CD4-positive, alpha-beta memory T cell (primary cell): ENCODE measurements at regions of chr1 and their contacts with region 1.

Region 1: DNA sequence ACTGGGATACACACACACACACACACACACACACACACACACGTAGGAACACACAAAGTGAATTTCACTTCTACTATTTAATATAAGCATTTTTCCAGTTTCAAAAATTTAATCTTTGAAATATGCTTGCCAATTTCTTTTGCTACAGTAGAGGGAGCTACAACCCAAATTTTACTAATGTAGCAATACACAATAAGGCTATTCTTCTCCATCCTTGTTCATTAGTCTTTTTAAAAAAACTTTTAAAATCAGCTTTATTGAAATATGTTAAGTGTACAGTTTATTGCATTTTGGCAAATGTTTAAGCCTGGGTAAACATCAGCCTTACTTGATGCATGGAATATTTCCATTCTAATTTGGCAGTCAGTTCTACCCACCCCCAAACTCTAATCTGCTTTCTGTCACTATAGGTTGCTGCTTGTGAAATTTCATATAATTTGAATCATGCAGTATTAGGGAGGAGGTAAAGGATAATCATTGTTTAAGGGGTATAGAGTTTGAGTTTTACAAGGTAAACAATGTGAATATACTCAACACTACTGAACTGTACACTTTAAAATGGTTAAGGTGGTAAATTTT is 93.0 kb upstream of the TENT5C start:
- DNase-seq: peak in 4 of 5 donors; percentile 23 to 35 (median 28)
- H3K4me3 ChIP-seq: no peak overlapping the region
- H3K4me3 Mint-ChIP-seq: no peak overlapping the region
- H3K27ac ChIP-seq: no peak overlapping the region
- H3K27ac Mint-ChIP-seq: no peak overlapping the region
- H3K4me1 ChIP-seq: no peaks in the 10 kb centered on the region
- H3K4me1 Mint-ChIP-seq: peaks cover 0 to 1% (median 0%) of the 10 kb centered on the region in 4 donors
- H3K27me3 ChIP-seq: no peaks in the 10 kb centered on the region
- H3K27me3 Mint-ChIP-seq: no peaks in the 10 kb centered on the region

Region 2: GRCh38 chr1:117392771-117393170 is 120.1 kb before region 1 on chr1:
- CTCF ChIA-PET with region 1: no interaction called
- POLR2A ChIA-PET with region 1: no interaction called
- intact Hi-C with region 1: no loop called
- DNase-seq: no peak
- H3K4me3 ChIP-seq: no peak overlapping the region
- H3K4me3 Mint-ChIP-seq: peak overlapping the region in 2 of 8 donors; percentile 17 to 26
- H3K27ac ChIP-seq: no peak overlapping the region
- H3K27ac Mint-ChIP-seq: no peak overlapping the region
- H3K4me1 ChIP-seq: peaks cover 49% of the 10 kb centered on the region
- H3K4me1 Mint-ChIP-seq: peaks cover 52 to 83% (median 64%) of the 10 kb centered on the region in 4 donors
- H3K27me3 ChIP-seq: no peaks in the 10 kb centered on the region
- H3K27me3 Mint-ChIP-seq: no peaks in the 10 kb centered on the region

Region 3: DNA sequence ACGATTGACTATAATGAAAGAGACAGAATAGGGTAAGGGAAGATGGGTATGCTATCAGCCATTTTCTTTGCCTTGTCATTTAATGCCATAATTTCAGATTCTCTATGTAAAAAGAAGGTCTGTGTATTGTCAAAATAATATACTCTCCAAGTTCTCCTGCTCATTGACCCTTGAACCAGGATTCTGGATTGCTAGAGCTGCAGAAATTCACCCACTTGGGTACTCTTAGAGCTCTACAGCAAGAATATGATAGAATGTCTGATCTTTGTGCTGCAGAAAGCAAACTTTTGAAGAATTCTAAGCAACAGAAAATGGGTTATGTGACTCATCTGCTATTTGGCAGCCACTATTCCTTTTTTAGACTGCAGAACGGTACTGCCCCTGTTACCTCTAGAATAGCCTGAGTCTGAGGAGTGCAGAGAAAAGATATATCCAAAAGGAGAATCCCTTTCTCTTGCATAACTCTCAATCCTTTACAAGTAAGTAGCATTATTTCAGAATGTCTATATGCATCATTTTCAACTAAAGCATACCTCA is 14.8 kb after region 1 on chr1:
- CTCF ChIA-PET with region 1: interaction called, 57 read pairs
- POLR2A ChIA-PET with region 1: no interaction called
- intact Hi-C with region 1: no loop called
- DNase-seq: no peak
- H3K4me3 ChIP-seq: no peak overlapping the region
- H3K4me3 Mint-ChIP-seq: no peak overlapping the region
- H3K27ac ChIP-seq: no peak overlapping the region
- H3K27ac Mint-ChIP-seq: no peak overlapping the region
- H3K4me1 ChIP-seq: no peaks in the 10 kb centered on the region
- H3K4me1 Mint-ChIP-seq: peaks cover 0 to 3% (median 0%) of the 10 kb centered on the region in 4 donors
- H3K27me3 ChIP-seq: no peaks in the 10 kb centered on the region
- H3K27me3 Mint-ChIP-seq: no peaks in the 10 kb centered on the region

Region 4: DNA sequence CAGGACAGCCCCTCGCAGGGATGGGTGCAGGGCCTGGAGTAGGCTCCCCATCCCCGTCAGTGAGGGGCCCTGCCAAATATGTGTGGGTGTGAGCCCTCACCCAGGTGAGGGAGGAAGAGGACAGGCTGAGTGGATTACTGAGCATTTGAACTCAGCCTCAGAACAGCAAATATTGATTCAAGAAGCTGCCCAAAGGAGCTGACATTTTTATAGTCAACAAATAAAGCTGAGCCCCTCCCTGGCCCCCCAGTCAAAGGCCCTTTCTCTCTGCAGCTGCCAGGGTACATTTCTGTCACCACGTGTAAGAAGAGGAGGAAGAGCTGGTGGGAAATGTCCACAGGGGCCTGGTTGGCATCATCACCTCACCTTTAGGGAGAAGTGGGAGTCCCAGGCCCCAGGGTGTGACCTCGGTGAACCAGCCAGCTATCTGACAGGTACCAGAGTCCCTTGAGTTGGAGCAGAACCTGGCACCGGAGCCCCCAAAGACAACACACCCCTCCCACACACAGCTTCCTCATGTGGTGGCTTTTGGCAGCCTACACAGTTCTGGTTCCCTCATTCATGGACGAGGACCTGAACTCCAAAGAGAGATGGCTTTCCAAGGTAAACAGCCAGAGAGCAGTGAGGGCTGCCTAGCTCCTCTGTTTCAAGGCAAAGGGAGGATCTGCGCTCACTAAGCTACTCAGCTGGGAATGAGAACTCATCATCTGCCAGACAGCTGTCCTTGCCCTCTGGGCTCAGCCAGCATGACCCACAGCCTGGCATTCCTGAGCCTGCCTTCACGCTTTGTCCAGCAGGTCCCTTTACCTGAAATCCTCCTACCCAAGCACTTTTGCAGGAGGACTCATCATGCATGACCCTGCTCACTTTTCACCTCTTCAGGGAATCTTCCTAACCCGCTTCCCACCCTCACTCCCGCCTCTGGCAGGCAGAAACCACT is 50.0 kb after region 1 on chr1:
- CTCF ChIA-PET with region 1: no interaction called
- POLR2A ChIA-PET with region 1: no interaction called
- intact Hi-C with region 1: no loop called
- DNase-seq: no peak
- H3K4me3 ChIP-seq: no peak overlapping the region
- H3K4me3 Mint-ChIP-seq: no peak overlapping the region
- H3K27ac ChIP-seq: no peak overlapping the region
- H3K27ac Mint-ChIP-seq: peak overlapping the region in 1 of 7 donors; percentile 41
- H3K4me1 ChIP-seq: no peaks in the 10 kb centered on the region
- H3K4me1 Mint-ChIP-seq: peaks cover 0 to 4% (median under 1%) of the 10 kb centered on the region in 4 donors
- H3K27me3 ChIP-seq: no peaks in the 10 kb centered on the region
- H3K27me3 Mint-ChIP-seq: no peaks in the 10 kb centered on the region